Caco-2 (cell line): ENCODE measurements at regions of chr5 and their contacts with region 1.

Region 1: GRCh38 chr5:142012792-142013388 is at the start of gene GNPDA1:
- DNase-seq: peak; percentile 79 to 86
- H3K4me3 ChIP-seq: peak within 1 kb of the TSS; percentile 87
- H3K4me3 Mint-ChIP-seq: peak within 1 kb of the TSS; percentile 85
- H3K27ac Mint-ChIP-seq: peak within 1 kb of the TSS; percentile 94
- H3K4me1 ChIP-seq: peaks cover 4% of the 10 kb centered on the region; the same call in 1 of the 2 replicates
- H3K4me1 Mint-ChIP-seq: peaks cover 7% of the 10 kb centered on the region
- H3K27me3 ChIP-seq: no peaks in the 10 kb centered on the region
- H3K27me3 Mint-ChIP-seq: no peaks in the 10 kb centered on the region
- CTCF ChIP-seq: no peak
- total RNA-seq, gene GNPDA1: 61.3 and 70.9 TPM in 2 replicates

Region 2: GRCh38 chr5:141968914-141969608 is 43.8 kb before region 1 on chr5 and contains the start of gene RNF14:
- CTCF ChIA-PET with region 1: interaction called, 5 read pairs
- POLR2A ChIA-PET with region 1: interaction called, 16 read pairs
- intact Hi-C with region 1: loop called (anchors 2 kb)
- DNase-seq: peak; percentile 94 to 95
- H3K4me3 ChIP-seq: peak within 1 kb of the TSS; percentile 84
- H3K4me3 Mint-ChIP-seq: peak within 1 kb of the TSS; percentile 82
- H3K27ac Mint-ChIP-seq: peak within 1 kb of the TSS; percentile 88
- H3K4me1 ChIP-seq: peaks cover 23% of the 10 kb centered on the region
- H3K4me1 Mint-ChIP-seq: peaks cover 6% of the 10 kb centered on the region
- H3K27me3 ChIP-seq: no peaks in the 10 kb centered on the region
- H3K27me3 Mint-ChIP-seq: no peaks in the 10 kb centered on the region
- CTCF ChIP-seq: peak; percentile 89 to 94
- total RNA-seq, gene RNF14: 35.1 and 38.7 TPM in 2 replicates

Region 3: DNA sequence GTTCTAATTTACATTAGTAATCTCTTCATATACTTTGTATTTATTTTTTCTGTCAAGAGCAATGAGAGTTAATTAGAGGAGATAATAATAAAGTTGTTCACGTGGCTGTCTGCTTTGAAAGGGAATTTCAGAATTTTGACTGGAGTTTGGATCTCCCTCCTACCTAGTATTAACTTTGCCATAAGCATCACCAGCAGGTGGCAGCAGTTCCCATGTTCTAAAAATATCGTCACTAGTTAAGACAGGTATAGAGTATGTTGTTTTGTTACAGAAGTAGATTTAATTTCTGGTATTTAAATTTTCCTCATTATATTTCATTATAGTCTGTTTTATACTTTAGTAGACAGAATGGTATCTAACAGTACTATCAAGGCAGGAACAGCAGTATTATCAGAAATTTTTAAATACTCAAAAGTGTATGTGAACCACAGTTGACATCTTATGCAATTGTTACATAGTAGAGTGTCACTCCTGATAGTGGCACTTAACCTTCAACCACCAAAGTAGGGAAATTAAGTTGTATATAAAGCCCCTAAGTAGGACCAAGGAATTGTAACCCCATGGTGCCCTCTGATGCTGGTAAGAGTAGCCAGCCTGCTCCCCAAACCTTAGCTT is 20.4 kb before region 1 on chr5:
- CTCF ChIA-PET with region 1: interaction called, 3 read pairs
- POLR2A ChIA-PET with region 1: no interaction called
- intact Hi-C with region 1: loop called (anchors 1 kb)
- DNase-seq: peak; percentile 69 to 72
- H3K4me3 ChIP-seq: no peak overlapping the region
- H3K4me3 Mint-ChIP-seq: no peak overlapping the region
- H3K27ac Mint-ChIP-seq: no peak overlapping the region
- H3K4me1 ChIP-seq: no peaks in the 10 kb centered on the region
- H3K4me1 Mint-ChIP-seq: no peaks in the 10 kb centered on the region
- H3K27me3 ChIP-seq: no peaks in the 10 kb centered on the region
- H3K27me3 Mint-ChIP-seq: no peaks in the 10 kb centered on the region
- CTCF ChIP-seq: peak; percentile 65 to 70

Region 4: DNA sequence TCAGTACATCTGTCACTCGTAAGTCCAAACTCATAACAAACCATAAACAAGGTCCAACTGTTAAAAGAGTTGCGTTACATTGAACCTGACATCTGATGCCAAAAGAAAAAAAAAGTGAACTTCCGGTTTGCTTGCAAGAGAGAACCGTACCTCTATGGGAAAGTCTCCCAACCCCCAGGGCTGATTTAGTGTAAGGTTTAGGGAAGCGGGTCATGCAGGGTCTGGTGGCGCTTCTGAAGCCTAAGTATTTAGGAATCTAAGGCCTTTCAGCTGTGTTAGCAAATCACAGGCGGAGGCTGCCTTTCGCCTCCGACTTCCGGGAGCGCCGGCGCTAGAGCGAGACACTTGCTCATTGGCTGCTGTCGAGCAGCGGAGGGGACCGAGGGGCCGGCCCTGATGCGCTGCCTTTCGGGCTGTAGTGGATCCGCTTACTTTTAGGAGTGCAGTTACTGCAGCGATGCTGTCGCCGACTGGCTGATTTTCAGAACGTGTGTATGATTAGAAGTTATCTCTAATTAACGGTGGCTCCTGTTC is 11.9 kb after region 1 on chr5:
- CTCF ChIA-PET with region 1: interaction called, 9 read pairs
- POLR2A ChIA-PET with region 1: no interaction called
- intact Hi-C with region 1: loop called (anchors 1 kb)
- DNase-seq: peak; percentile 88 to 89
- H3K4me3 ChIP-seq: peak overlapping the region; percentile 56
- H3K4me3 Mint-ChIP-seq: peak overlapping the region; percentile 84
- H3K27ac Mint-ChIP-seq: peak overlapping the region; percentile 74
- H3K4me1 ChIP-seq: no peaks in the 10 kb centered on the region
- H3K4me1 Mint-ChIP-seq: no peaks in the 10 kb centered on the region
- H3K27me3 ChIP-seq: no peaks in the 10 kb centered on the region
- H3K27me3 Mint-ChIP-seq: peaks cover 2% of the 10 kb centered on the region
- CTCF ChIP-seq: no peak